BJ (cell line): ENCODE measurements at regions of chr15 and their contacts with region 1.

Region 1: GRCh38 chr15:75367913-75368688 is at the start of gene MAN2C1:
- DNase-seq: peak; percentile 75
- H3K4me3 ChIP-seq: peak within 1 kb of the TSS; percentile 87
- H3K27me3 ChIP-seq: no peaks in the 10 kb centered on the region
- CTCF ChIP-seq: peak; percentile 77
- polyA plus RNA-seq, gene MAN2C1: 42.5 and 82.5 TPM in 2 replicates

Region 2: GRCh38 chr15:75347222-75347878 is 20.8 kb before region 1 on chr15:
- CTCF ChIA-PET with region 1: interaction called, 13 read pairs
- POLR2A ChIA-PET with region 1: no interaction called
- DNase-seq: no peak
- H3K4me3 ChIP-seq: peak overlapping the region; percentile 82
- H3K27me3 ChIP-seq: peaks cover 12% of the 10 kb centered on the region
- CTCF ChIP-seq: no peak

Region 3: DNA sequence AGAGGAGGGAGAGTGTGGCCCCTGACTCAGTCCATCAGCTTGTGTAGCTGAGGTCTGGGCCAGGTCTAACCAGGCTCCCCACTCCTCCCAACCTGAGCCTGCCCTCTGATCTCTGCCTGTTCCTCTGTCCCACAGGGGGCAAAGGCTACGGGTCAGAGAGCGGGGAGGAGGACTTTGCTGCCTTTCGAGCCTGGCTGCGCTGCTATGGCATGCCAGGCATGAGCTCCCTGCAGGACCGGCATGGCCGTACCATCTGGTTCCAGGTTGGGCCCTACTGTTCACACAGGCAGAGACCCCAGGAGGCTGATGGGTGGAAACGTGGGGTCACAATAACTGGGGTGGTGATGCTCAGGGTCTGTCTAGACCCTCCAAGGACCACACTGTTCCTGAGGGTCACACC is 14.5 kb before region 1 on chr15:
- CTCF ChIA-PET with region 1: interaction called, 13 read pairs
- POLR2A ChIA-PET with region 1: no interaction called
- DNase-seq: no peak
- H3K4me3 ChIP-seq: no peak overlapping the region
- H3K27me3 ChIP-seq: peaks cover 6% of the 10 kb centered on the region; the same call in 1 of the 2 replicates
- CTCF ChIP-seq: no peak

Region 4: GRCh38 chr15:75380773-75381172 is 12.7 kb after region 1 on chr15:
- CTCF ChIA-PET with region 1: interaction called, 19 read pairs
- POLR2A ChIA-PET with region 1: interaction called, 5 read pairs
- DNase-seq: no peak
- H3K4me3 ChIP-seq: no peak overlapping the region
- H3K27me3 ChIP-seq: no peaks in the 10 kb centered on the region
- CTCF ChIP-seq: no peak